ENCODE measurements at regions of chr11 and their contacts with region 1.

Region 1: DNA sequence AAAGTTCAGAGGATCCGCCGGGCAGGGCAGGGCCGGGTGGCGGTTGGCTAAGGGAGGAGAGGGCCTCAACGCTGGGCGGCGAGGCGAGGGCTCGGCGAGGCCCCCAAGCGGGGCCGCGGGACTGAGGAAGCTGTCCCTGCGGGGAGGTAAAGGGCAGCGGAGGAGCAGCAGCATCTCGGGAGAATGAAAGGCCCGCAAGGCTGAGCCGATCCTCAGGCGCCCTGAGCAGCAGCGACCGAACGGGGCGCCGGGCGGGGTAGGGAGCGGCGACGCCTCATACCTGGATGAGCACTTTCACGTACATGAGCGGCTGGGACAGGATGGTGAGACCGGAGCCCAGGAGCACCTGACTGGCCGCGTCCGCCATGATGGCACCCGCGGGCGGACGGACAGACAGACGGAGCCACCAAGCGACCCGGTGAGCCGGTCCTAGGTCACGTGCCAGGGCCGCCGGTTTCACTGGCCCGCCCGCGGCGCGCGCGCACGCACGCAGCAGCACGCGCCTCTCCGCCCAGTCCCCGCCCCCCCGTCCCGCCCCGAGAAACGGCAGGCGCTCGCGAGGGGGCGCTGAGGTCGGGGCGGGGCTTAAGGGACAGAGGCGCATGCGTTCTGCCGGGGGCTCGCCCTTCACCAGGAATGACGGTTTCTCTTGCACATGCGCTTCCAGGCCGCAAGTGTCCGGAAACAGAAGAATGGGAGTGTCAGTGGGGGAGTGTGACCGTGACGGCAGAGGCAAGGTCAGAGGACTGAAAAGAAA is at the start of gene MTCH2:
- DNase-seq: peak; percentile 97
- ATAC-seq: peak; percentile 99
- H3K4me3 ChIP-seq: peak within 1 kb of the TSS; percentile 73
- H3K27ac ChIP-seq: peak within 1 kb of the TSS; percentile 85
- H3K4me1 ChIP-seq: no peaks in the 10 kb centered on the region
- H3K27me3 ChIP-seq: no peaks in the 10 kb centered on the region
- CTCF ChIP-seq: peak; percentile 34; the same call in 1 of the 2 replicates
- POLR2A ChIP-seq: peak; percentile 95
- RAD21 ChIP-seq: no peak
- total RNA-seq, gene MTCH2: 163 and 207 TPM in 2 replicates

Region 2: GRCh38 chr11:47495011-47495855 is 147.0 kb before region 1 on chr11:
- CTCF ChIA-PET with region 1: no interaction called
- POLR2A ChIA-PET with region 1: no interaction called
- dilution Hi-C with region 1: no loop called
- in situ Hi-C with region 1: no loop called
- intact Hi-C with region 1: no loop called
- DNase-seq: peak; percentile 60
- ATAC-seq: peak; percentile 64
- H3K4me3 ChIP-seq: no peak overlapping the region
- H3K27ac ChIP-seq: peak overlapping the region; percentile 65; the same call in 1 of the 2 replicates
- H3K4me1 ChIP-seq: peaks cover 9% of the 10 kb centered on the region
- H3K27me3 ChIP-seq: no peaks in the 10 kb centered on the region
- CTCF ChIP-seq: no peak
- POLR2A ChIP-seq: no peak
- RAD21 ChIP-seq: no peak

Region 3: DNA sequence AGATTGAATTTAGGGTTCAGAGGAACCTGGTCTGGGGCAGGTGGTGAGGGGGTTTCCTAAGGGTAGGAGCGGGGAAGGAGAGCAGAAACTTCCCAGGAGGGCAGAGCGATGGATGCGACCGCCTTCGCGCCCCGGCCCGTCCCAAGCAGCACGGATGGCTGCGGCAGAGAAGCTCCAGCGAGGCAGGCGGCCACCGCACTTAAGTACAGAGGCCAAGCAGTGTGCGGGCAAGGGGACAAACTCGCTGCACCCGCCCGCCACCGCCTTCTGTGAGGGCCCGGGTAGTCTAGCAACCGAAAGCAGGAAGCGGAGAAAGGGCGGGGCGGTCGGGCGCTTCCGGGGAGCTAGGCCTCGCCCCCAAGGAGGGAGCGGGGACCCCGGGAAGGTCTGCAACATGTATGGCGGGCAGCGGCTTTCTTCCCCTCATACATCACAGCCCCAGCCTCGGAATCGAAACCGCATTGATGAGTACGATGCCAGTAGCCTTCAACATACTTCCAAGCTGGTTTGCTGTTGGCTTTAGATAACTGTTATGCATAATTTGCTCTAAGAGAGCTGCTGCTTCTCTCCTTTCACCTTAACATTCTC is 72.9 kb after region 1 on chr11 and contains the start of gene AGBL2:
- CTCF ChIA-PET with region 1: no interaction called
- POLR2A ChIA-PET with region 1: no interaction called
- dilution Hi-C with region 1: no loop called
- in situ Hi-C with region 1: loop called (anchors 5 kb)
- intact Hi-C with region 1: loop called (anchors 2 kb)
- DNase-seq: peak; percentile 50
- ATAC-seq: peak; percentile 97
- H3K4me3 ChIP-seq: peak within 1 kb of the TSS; percentile 50
- H3K27ac ChIP-seq: peak within 1 kb of the TSS; percentile 52
- H3K4me1 ChIP-seq: no peaks in the 10 kb centered on the region; the same call in 1 of the 2 replicates
- H3K27me3 ChIP-seq: no peaks in the 10 kb centered on the region
- CTCF ChIP-seq: no peak
- POLR2A ChIP-seq: no peak
- RAD21 ChIP-seq: no peak
- total RNA-seq, gene AGBL2: 0.36 and 0.56 TPM in 2 replicates

Region 4: GRCh38 chr11:47724041-47724729 is 81.9 kb after region 1 on chr11:
- CTCF ChIA-PET with region 1: no interaction called
- POLR2A ChIA-PET with region 1: no interaction called
- dilution Hi-C with region 1: no loop called
- in situ Hi-C with region 1: no loop called
- intact Hi-C with region 1: loop called (anchors 2 kb)
- DNase-seq: peak; percentile 89
- ATAC-seq: peak; percentile 83
- H3K4me3 ChIP-seq: no peak overlapping the region
- H3K27ac ChIP-seq: peak overlapping the region; percentile 67; the same call in 1 of the 2 replicates
- H3K4me1 ChIP-seq: peaks cover 2% of the 10 kb centered on the region; the same call in 1 of the 2 replicates
- H3K27me3 ChIP-seq: no peaks in the 10 kb centered on the region
- CTCF ChIP-seq: no peak
- POLR2A ChIP-seq: no peak
- RAD21 ChIP-seq: no peak

Region 5: GRCh38 chr11:47766305-47767227 is 124.3 kb after region 1 on chr11:
- CTCF ChIA-PET with region 1: no interaction called
- POLR2A ChIA-PET with region 1: no interaction called
- dilution Hi-C with region 1: no loop called
- in situ Hi-C with region 1: no loop called
- intact Hi-C with region 1: no loop called
- DNase-seq: peak; percentile 66
- ATAC-seq: peak; percentile 9
- H3K4me3 ChIP-seq: peak overlapping the region; percentile 65
- H3K27ac ChIP-seq: peak overlapping the region; percentile 92
- H3K4me1 ChIP-seq: 0 out of 2 replicates have a peak, but pooled peaks cover 1% of the 10 kb centered on the region
- H3K27me3 ChIP-seq: no peaks in the 10 kb centered on the region
- CTCF ChIP-seq: no peak
- POLR2A ChIP-seq: no peak
- RAD21 ChIP-seq: no peak

Region 6: GRCh38 chr11:47847892-47848635 is 205.8 kb after region 1 on chr11 and contains the start of gene NUP160:
- CTCF ChIA-PET with region 1: no interaction called
- POLR2A ChIA-PET with region 1: no interaction called
- dilution Hi-C with region 1: no loop called
- in situ Hi-C with region 1: no loop called
- intact Hi-C with region 1: loop called (anchors 5 kb)
- DNase-seq: peak; percentile 29
- ATAC-seq: peak; percentile 94
- H3K4me3 ChIP-seq: peak within 1 kb of the TSS; percentile 92
- H3K27ac ChIP-seq: peak within 1 kb of the TSS; percentile 80
- H3K4me1 ChIP-seq: no peaks in the 10 kb centered on the region
- H3K27me3 ChIP-seq: no peaks in the 10 kb centered on the region
- CTCF ChIP-seq: no peak
- POLR2A ChIP-seq: peak; percentile 59; the same call in 1 of the 2 replicates
- RAD21 ChIP-seq: no peak
- total RNA-seq, gene NUP160: 33.9 and 35.0 TPM in 2 replicates

Measured in IMR-90 (cell line).